Gastrocnemius medialis (tissue), 4 donors: ENCODE measurements at regions of chr1 and their contacts with region 1.

Region 1: GRCh38 chr1:71004966-71005365 is 42.6 kb downstream of the PTGER3 start:
- DNase-seq: no peak
- ATAC-seq: no peak
- H3K4me3 ChIP-seq: no peak overlapping the region
- H3K27ac ChIP-seq: no peak overlapping the region
- H3K4me1 ChIP-seq: no peaks in the 10 kb centered on the region
- H3K27me3 ChIP-seq: no peaks in the 10 kb centered on the region
- CTCF ChIP-seq: no peak
- POLR2A ChIP-seq: no peak

Region 2: GRCh38 chr1:70874818-70875217 is 130.1 kb before region 1 on chr1:
- in situ Hi-C with region 1: no loop called
- intact Hi-C with region 1: loop called (anchors 5 kb)
- DNase-seq: no peak
- ATAC-seq: no peak
- H3K4me3 ChIP-seq: no peak overlapping the region
- H3K27ac ChIP-seq: no peak overlapping the region
- H3K4me1 ChIP-seq: no peaks in the 10 kb centered on the region
- H3K27me3 ChIP-seq: no peaks in the 10 kb centered on the region
- CTCF ChIP-seq: no peak
- POLR2A ChIP-seq: no peak